K562 (cell line): ENCODE measurements at regions of chr5 and their contacts with region 1.

Region 1: GRCh38 chr5:36397901-36398536 is 96.3 kb upstream of the RANBP3L start:
- DNase-seq: peak in 1 of 4 experiments; percentile 43
- ATAC-seq: peak; percentile 79
- H3K4me3 ChIP-seq: no peak overlapping the region
- H3K27ac ChIP-seq: no peak overlapping the region
- H3K4me1 ChIP-seq: no peaks in the 10 kb centered on the region
- H3K27me3 ChIP-seq: 0 out of 5 replicates have a peak, but pooled peaks cover 0 to 5% of the 10 kb centered on the region in 2 experiments
- CTCF ChIP-seq: peak; percentile 41 to 65 (median 48); a peak in 4 of 6 replicates
- EP300 ChIP-seq: no peak
- POLR2A ChIP-seq: no peak
- RAD21 ChIP-seq: peak; percentile 55 to 77

Region 2: GRCh38 chr5:36060420-36060887 is 337.6 kb before region 1 on chr5:
- CTCF ChIA-PET with region 1: interaction called, 6 read pairs
- POLR2A ChIA-PET with region 1: no interaction called
- in situ Hi-C with region 1: no loop called
- intact Hi-C with region 1: loop called (anchors 5 kb)
- DNase-seq: peak; percentile 21 to 35 (median 24)
- ATAC-seq: peak; percentile 93
- H3K4me3 ChIP-seq: no peak overlapping the region
- H3K27ac ChIP-seq: no peak overlapping the region
- H3K4me1 ChIP-seq: no peaks in the 10 kb centered on the region
- H3K27me3 ChIP-seq: peaks cover 5 to 8% of the 10 kb centered on the region in 2 experiments; a peak in 4 of 5 replicates
- CTCF ChIP-seq: peak; percentile 46 to 64 (median 49); a peak in 4 of 6 replicates
- EP300 ChIP-seq: no peak
- POLR2A ChIP-seq: no peak
- RAD21 ChIP-seq: peak; percentile 38 to 74

Region 3: DNA sequence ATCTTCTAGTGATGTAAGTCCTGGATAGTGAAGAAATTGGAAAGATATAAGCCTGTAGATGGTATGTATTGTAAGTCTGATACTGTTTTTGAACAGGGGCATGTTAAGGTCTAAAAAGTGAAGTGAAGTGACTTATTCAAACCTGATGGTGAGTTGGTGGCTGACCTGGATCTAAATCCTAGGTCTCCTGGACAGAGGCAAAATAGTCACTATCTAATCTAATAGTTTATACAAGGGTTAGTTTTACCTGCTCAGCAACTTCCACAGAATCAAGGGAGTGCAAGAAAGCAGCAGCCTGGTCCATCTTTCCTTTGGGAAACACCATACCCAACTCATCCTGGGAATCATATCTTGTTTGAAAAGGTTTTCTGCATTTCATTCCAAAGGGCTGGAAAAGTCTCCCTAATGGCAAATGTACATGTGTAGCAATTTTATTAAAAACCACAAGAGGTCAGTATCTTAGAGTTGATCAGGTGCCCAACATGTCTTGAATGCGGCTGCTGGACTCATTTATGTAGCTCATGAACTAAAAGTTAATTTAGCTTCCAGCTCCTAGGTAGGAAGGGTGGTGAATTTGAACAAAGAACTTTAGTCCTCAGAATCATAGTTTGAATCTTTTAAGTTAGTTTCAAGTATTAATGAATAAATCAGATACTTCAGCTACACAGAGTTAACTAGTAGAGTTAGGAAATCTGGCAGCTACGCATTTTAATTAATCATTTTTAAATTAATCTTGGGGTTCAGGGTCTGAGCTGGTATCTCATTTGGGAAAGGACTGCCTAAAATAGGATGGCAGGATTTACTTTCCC is 220.1 kb before region 1 on chr5:
- CTCF ChIA-PET with region 1: no interaction called
- POLR2A ChIA-PET with region 1: no interaction called
- in situ Hi-C with region 1: no loop called
- intact Hi-C with region 1: loop called (anchors 10 kb)
- DNase-seq: peak in 2 of 4 experiments; percentile 17 to 37
- ATAC-seq: peak; percentile 81
- H3K4me3 ChIP-seq: no peak overlapping the region
- H3K27ac ChIP-seq: no peak overlapping the region
- H3K4me1 ChIP-seq: no peaks in the 10 kb centered on the region
- H3K27me3 ChIP-seq: no peaks in the 10 kb centered on the region
- CTCF ChIP-seq: peak; percentile 36 to 65 (median 52); a peak in 5 of 6 replicates
- EP300 ChIP-seq: no peak
- POLR2A ChIP-seq: no peak
- RAD21 ChIP-seq: peak; percentile 43 to 70

Region 4: DNA sequence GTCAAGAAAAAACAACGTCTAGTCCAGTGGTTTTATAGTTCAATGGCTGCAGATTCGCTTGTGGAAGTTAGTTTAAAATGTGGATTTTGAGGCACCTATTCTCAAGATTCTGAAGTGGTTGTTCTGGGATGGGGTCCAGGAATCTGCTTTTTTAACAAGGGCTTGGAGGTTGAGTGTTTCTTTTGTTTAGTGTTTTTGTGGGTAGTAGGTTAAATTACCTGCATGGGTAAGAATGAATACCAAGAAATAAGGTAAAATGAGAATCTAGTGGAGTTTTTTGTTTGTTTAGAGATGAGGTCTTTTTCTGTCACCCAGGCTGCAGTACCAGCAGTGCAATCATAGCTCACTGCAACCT is 127.8 kb before region 1 on chr5:
- CTCF ChIA-PET with region 1: interaction called, 4 read pairs
- POLR2A ChIA-PET with region 1: no interaction called
- in situ Hi-C with region 1: no loop called
- intact Hi-C with region 1: loop called (anchors 5 kb)
- DNase-seq: no peak
- ATAC-seq: no peak
- H3K4me3 ChIP-seq: no peak overlapping the region
- H3K27ac ChIP-seq: no peak overlapping the region
- H3K4me1 ChIP-seq: no peaks in the 10 kb centered on the region
- H3K27me3 ChIP-seq: no peaks in the 10 kb centered on the region
- CTCF ChIP-seq: no peak
- EP300 ChIP-seq: no peak
- POLR2A ChIP-seq: no peak
- RAD21 ChIP-seq: no peak

Region 5: DNA sequence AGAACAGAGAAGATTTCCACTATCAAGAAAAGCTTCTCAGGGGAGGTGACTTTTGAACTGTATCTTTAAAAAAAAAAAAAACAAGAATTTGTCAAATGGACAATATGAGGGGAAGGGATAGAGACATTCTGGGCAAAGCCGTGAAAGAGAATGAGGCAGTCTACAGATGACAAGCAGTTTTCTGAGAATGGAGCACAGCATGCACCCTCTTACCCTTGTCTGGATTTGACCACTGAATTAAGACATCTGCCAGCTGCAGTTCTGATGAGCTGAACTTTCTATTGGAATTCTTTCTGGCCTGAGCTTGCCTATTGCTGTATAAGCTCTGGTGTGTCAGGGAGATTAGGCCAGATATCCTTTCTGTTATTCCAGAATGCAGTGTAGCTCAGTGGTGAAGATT is 86.1 kb before region 1 on chr5:
- CTCF ChIA-PET with region 1: no interaction called
- POLR2A ChIA-PET with region 1: no interaction called
- in situ Hi-C with region 1: no loop called
- intact Hi-C with region 1: loop called (anchors 5 kb)
- DNase-seq: no peak
- ATAC-seq: no peak
- H3K4me3 ChIP-seq: no peak overlapping the region
- H3K27ac ChIP-seq: no peak overlapping the region
- H3K4me1 ChIP-seq: no peaks in the 10 kb centered on the region
- H3K27me3 ChIP-seq: peaks cover 0 to 2% of the 10 kb centered on the region in 2 experiments; a peak in 1 of 5 replicates
- CTCF ChIP-seq: no peak
- EP300 ChIP-seq: no peak
- POLR2A ChIP-seq: no peak
- RAD21 ChIP-seq: no peak